Activated CD4-positive, alpha-beta memory T cell treated with anti-CD3 and anti-CD28 coated beads for 36 hours (primary cell): ENCODE measurements at regions of chr7 and their contacts with region 1.

Region 1: DNA sequence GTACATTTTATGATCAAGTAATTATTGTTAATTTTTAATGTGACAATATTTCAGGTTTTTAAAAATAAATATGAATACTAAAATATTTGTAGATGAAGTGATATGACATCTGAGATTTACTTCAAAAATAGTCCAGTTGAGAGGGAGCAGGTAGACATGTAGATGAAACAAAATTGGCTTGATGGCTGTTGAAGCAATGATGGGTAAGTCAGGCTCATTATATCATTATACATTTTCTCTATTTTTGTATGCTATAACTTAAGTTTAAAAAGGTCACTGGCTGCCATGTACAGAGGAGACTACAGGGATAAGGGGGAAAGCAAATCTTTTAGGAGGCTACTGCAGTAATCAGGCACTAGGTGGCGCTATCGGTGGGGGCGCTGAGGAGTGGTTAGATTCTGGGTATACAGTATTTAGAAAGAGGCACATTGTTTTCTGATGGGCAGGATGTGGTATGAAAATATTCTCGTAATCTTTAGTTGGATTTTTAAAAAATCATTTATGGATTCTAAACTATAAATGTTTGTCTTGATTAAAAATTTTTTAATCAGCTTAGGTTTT is 189.8 kb upstream of the IMMP2L start:
- DNase-seq: peak; percentile 75
- H3K4me3 Mint-ChIP-seq: no peak overlapping the region
- H3K27ac Mint-ChIP-seq: no peak overlapping the region
- H3K4me1 Mint-ChIP-seq: no peaks in the 10 kb centered on the region
- H3K27me3 Mint-ChIP-seq: peaks cover 7% of the 10 kb centered on the region

Region 2: GRCh38 chr7:111633878-111634277 is 118.2 kb before region 1 on chr7:
- CTCF ChIA-PET with region 1: no interaction called
- POLR2A ChIA-PET with region 1: no interaction called
- intact Hi-C with region 1: no loop called
- DNase-seq: no peak
- H3K4me3 Mint-ChIP-seq: no peak overlapping the region
- H3K27ac Mint-ChIP-seq: no peak overlapping the region
- H3K4me1 Mint-ChIP-seq: no peaks in the 10 kb centered on the region
- H3K27me3 Mint-ChIP-seq: peaks cover 6% of the 10 kb centered on the region

Region 3: GRCh38 chr7:111741811-111742240 is 10.3 kb before region 1 on chr7:
- CTCF ChIA-PET with region 1: interaction called, 10 read pairs
- POLR2A ChIA-PET with region 1: no interaction called
- intact Hi-C with region 1: no loop called
- DNase-seq: peak; percentile 32
- H3K4me3 Mint-ChIP-seq: no peak overlapping the region
- H3K27ac Mint-ChIP-seq: no peak overlapping the region
- H3K4me1 Mint-ChIP-seq: no peaks in the 10 kb centered on the region
- H3K27me3 Mint-ChIP-seq: peaks cover 3% of the 10 kb centered on the region

Region 4: DNA sequence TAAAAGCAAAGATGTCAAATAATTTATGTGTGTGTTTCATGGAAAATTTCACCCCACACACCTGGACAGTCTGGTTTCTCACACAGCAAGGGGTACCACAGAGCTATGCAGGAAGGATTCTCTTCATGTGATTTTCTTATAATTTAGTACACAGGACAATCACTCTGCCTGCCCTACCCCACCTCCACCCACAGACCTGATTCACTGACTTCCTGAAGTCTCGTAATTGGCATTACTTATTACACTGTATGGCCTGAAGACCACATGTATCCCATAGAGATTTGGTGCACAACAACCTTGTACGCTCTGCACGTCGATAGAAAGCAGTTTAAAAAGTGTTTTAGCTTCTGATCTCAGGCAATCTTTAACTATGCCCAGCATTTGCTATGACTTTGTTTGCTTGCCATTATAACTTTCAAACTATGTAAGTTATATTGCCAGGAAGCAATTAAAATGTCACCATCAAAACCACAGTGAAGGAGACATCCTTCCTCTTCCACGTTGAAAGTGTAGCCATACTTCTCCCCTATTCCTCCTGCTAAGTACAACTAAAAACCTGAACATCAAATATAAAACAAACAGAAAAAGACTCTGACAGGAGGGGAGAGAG is 89.6 kb after region 1 on chr7:
- CTCF ChIA-PET with region 1: no interaction called
- POLR2A ChIA-PET with region 1: no interaction called
- intact Hi-C with region 1: no loop called
- DNase-seq: no peak
- H3K4me3 Mint-ChIP-seq: no peak overlapping the region
- H3K27ac Mint-ChIP-seq: no peak overlapping the region
- H3K4me1 Mint-ChIP-seq: no peaks in the 10 kb centered on the region
- H3K27me3 Mint-ChIP-seq: no peaks in the 10 kb centered on the region

Region 5: GRCh38 chr7:111855161-111855856 is 103.2 kb after region 1 on chr7:
- CTCF ChIA-PET with region 1: interaction called, 7 read pairs
- POLR2A ChIA-PET with region 1: no interaction called
- intact Hi-C with region 1: loop called (anchors 1 kb)
- DNase-seq: peak; percentile 12
- H3K4me3 Mint-ChIP-seq: no peak overlapping the region
- H3K27ac Mint-ChIP-seq: no peak overlapping the region
- H3K4me1 Mint-ChIP-seq: no peaks in the 10 kb centered on the region
- H3K27me3 Mint-ChIP-seq: no peaks in the 10 kb centered on the region

Region 6: GRCh38 chr7:112411186-112411795 is 659.2 kb after region 1 on chr7:
- CTCF ChIA-PET with region 1: interaction called, 4 read pairs
- POLR2A ChIA-PET with region 1: interaction called, 3 read pairs
- intact Hi-C with region 1: loop called (anchors 2 kb)
- DNase-seq: no peak
- H3K4me3 Mint-ChIP-seq: no peak overlapping the region
- H3K27ac Mint-ChIP-seq: no peak overlapping the region
- H3K4me1 Mint-ChIP-seq: no peaks in the 10 kb centered on the region
- H3K27me3 Mint-ChIP-seq: peaks cover 16% of the 10 kb centered on the region

Region 7: DNA sequence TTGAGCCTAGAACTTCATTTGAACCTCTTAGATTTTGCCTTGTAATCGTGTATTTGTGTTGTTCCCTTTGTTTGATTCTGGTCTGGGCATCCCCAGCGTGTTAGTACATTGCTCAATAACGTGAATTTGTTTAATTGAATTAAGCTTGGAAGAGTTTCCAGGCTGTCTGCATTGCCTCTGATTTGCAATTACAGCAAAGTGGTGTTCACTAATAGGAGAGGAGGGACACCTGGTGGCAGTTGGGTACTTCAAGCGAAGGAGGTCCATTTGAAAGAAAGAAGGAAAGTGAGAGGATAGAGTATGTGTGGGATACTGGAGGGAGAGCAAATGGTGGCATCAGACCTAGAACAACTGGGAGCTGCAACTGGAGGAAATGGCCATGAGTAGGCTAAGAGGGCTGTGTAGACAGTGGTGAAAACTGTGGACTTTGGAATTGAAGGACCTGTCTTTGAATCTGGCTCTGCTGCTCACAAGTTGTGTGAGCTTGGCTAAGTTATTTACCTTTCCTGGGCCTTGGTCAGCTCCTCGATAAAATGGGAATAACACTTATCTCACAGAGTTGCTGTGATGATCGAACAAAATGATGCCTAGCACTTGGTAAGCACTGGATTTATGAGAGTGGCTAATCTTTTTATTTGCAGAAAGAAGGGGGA is 743.8 kb after region 1 on chr7:
- CTCF ChIA-PET with region 1: interaction called, 17 read pairs
- POLR2A ChIA-PET with region 1: no interaction called
- intact Hi-C with region 1: no loop called
- DNase-seq: peak; percentile 51
- H3K4me3 Mint-ChIP-seq: no peak overlapping the region
- H3K27ac Mint-ChIP-seq: no peak overlapping the region
- H3K4me1 Mint-ChIP-seq: no peaks in the 10 kb centered on the region
- H3K27me3 Mint-ChIP-seq: peaks cover 1% of the 10 kb centered on the region